ENCODE measurements at regions of chr2 and their contacts with region 1.

Region 1: DNA sequence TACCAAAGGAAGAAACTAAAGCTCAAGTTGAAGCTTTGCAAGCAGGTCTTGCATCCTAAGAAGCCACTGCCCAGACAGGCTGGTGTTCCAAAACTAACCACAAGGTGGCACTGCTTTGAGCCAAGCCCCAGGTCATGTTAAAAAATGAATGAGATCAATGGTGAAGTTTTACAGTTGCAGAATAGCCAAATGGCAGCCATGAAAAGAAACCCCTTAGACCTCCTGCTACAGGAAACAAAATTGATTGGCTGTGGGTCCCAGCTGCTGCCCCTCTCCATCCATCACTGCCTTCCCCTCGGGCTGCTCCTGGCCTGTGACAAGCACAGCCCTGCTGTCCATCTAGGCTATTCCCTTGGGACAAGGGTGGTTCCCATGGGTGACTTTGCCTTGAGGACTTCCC is 20.7 kb upstream of the MREG start:
- DNase-seq: peak; percentile 46
- H3K4me3 ChIP-seq: no peak overlapping the region
- H3K27ac ChIP-seq: no peak overlapping the region
- H3K4me1 ChIP-seq: peaks cover 5% of the 10 kb centered on the region
- H3K27me3 ChIP-seq: no peaks in the 10 kb centered on the region
- CTCF ChIP-seq: peak; percentile 90 to 95

Region 2: GRCh38 chr2:215161301-215161829 is 872.7 kb before region 1 on chr2:
- CTCF ChIA-PET with region 1: no interaction called
- dilution Hi-C with region 1: no loop called
- in situ Hi-C with region 1: no loop called
- intact Hi-C with region 1: no loop called
- DNase-seq: no peak
- H3K4me3 ChIP-seq: no peak overlapping the region
- H3K27ac ChIP-seq: no peak overlapping the region
- H3K4me1 ChIP-seq: no peaks in the 10 kb centered on the region
- H3K27me3 ChIP-seq: no peaks in the 10 kb centered on the region
- CTCF ChIP-seq: no peak

Region 3: DNA sequence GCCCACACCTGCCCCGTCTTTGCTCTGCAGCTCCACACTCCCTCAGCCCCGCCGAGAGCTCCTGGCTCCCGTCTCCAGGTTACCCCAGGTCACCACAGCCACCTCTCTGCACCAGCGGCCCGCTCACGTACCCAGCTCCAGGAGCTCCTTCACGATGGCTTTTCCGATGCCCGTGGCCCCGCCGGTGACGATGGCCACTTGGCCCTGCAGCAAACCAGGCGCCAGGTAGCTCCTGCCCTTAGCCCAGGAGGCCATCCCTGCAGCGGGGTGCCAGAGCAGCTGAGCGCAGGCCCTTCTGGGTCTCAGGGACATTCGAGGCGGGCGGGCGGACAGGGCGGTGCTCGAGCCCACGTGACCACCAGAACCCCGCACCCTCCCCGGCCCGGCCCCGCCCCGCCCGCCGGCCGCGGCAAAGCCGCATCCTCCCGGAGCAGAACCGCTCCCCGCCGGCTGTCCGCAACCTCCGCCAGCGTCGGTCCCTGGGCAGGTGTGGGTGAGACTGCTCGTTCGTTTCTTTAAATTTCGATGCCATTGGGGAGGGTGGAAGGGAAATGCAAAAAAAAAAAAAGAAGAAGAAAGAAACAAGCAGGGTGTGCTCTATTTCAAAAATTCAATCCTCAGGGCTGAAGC is 47.5 kb after region 1 on chr2 and contains the starts of genes PECR and TMEM169:
- CTCF ChIA-PET with region 1: no interaction called
- dilution Hi-C with region 1: no loop called
- in situ Hi-C with region 1: no loop called
- intact Hi-C with region 1: loop called (anchors 2 kb)
- DNase-seq: peak; percentile 71
- H3K4me3 ChIP-seq: peak within 1 kb of the TSS; percentile 85 to 90 (median 90)
- H3K27ac ChIP-seq: no peak within 1 kb of the TSS
- H3K4me1 ChIP-seq: peaks cover 24% of the 10 kb centered on the region
- H3K27me3 ChIP-seq: no peaks in the 10 kb centered on the region
- CTCF ChIP-seq: no peak
- total RNA-seq, gene PECR: 8.8 to 11.2 TPM
- total RNA-seq, gene TMEM169: 0.24 to 1.8 TPM

Region 4: GRCh38 chr2:216108967-216109921 is 75.2 kb after region 1 on chr2 and contains the start of gene XRCC5:
- CTCF ChIA-PET with region 1: interaction called, 6 read pairs
- dilution Hi-C with region 1: no loop called
- in situ Hi-C with region 1: no loop called
- intact Hi-C with region 1: loop called (anchors 1 kb)
- DNase-seq: peak; percentile 95
- H3K4me3 ChIP-seq: peak within 1 kb of the TSS; percentile 85 to 90 (median 89)
- H3K27ac ChIP-seq: peak within 1 kb of the TSS; percentile 86
- H3K4me1 ChIP-seq: peaks cover 18% of the 10 kb centered on the region
- H3K27me3 ChIP-seq: no peaks in the 10 kb centered on the region
- CTCF ChIP-seq: no peak
- total RNA-seq, gene XRCC5: 191 to 245 TPM

Region 5: DNA sequence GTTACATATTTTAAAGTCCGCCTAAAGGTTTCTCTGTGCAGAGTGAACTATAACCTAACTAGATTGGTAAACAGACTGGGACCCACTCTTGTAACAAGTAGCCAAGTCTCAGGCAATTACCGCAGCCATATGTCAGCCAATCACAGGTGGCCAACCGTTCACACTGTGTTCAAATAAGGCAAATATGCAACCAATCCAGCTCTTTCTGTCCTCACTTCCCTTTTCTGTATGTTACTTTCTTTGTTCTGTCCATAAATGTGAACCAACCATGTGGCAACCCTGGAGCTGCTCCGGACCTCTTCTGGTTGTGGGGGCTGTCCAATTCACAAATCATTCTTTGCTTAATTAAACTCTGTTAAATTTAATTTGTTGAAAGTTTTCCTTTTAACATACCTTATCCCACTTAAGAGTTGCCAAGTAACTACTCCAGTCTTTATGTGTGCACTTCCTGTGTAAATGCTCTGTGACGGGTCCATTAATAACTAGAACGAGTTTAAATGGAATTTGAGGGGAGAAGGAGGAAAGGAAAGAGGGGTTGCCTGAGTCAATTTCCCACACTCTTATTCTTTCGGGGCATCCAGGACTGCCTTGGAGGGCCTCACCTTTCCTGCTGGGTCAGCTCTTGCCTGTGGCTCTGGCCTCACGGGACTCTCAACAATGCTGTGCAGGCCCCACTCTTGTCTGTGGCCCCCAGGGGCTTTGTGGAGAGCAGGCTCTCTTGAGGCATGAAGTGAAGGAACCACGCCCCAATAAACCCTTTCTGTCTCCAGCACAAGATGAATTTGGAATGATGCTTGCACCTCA is 457.9 kb after region 1 on chr2:
- CTCF ChIA-PET with region 1: no interaction called
- dilution Hi-C with region 1: loop called (anchors 5 kb)
- in situ Hi-C with region 1: no loop called
- intact Hi-C with region 1: no loop called
- DNase-seq: no peak
- H3K4me3 ChIP-seq: no peak overlapping the region
- H3K27ac ChIP-seq: no peak overlapping the region
- H3K4me1 ChIP-seq: peaks cover 31% of the 10 kb centered on the region
- H3K27me3 ChIP-seq: no peaks in the 10 kb centered on the region
- CTCF ChIP-seq: no peak

Measured in mammary epithelial cell (primary cell).